Common myeloid progenitor, CD34-positive (primary cell): ENCODE measurements at regions of chr12 and their contacts with region 1.

Region 1: DNA sequence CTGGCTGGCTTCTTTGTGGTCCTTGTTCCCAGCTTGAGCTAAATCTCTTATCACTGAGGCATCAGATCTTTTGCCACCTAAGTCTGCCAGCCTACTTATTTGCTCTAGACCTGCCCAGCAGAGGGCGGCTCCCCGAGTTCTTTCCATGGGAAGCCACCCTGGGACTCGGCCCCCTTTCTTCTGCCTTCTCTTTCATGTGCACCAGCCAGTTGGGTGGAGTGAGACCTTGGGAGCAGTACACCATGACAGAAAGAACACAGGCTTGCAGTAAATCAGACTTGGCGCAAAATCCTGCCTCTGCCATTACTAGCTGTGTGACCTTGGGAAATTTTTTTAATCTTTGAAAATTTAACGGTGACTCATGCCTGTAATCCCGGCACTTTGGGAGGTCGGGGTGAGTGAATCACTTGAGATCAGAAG is 7.4 kb downstream of the SMAGP start:
- DNase-seq: peak; percentile 65 to 76 (median 68)
- H3K4me3 ChIP-seq: no peak overlapping the region
- H3K27ac ChIP-seq: no peak overlapping the region
- H3K4me1 ChIP-seq: peaks cover 0 to 2% (median 0%) of the 10 kb centered on the region in 4 experiments
- H3K27me3 ChIP-seq: no peaks in the 10 kb centered on the region

Region 2: DNA sequence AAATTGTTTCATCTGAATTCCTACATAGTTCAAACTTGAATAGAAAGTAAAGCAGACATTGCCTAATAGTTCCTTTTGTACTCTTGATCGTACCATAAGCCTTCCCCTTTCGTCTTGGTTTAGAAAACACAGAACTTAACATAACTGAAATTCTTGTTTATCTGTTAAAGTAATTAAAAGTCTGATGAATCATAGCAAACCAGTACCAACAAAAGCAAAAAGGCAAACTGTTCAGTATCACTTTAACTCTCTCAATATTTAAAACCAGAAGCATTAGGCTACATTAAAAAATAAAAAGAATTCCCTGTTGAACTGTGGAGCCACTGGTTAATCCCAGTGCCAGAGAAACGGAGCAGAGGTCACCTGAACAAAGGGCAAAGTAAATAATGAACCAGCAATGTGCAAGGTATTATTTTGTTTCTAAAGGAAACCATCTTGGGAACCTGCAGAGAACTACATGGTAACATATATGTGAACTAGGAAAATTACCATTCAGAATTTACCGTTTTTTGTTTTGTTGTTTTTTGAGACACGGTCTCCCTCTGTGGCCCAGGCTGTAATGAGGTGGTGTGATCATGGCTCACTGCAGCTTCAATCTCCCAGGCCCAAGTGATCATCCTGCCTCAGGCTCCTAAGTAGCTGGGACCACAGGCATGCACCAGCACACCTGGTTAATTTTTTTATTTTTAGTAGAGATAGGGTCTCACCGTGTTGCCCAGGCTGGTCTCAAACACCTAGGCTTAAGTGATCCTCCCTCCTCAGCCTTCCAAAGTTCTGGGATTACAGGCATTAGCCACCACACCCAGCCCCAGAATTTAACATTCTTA is 327.6 kb before region 1 on chr12:
- CTCF ChIA-PET with region 1: no interaction called
- POLR2A ChIA-PET with region 1: no interaction called
- DNase-seq: peak in 2 of 3 donors; percentile 44 to 57
- H3K4me3 ChIP-seq: peak overlapping the region in 4 of 7 experiments; percentile 23 to 68 (median 46)
- H3K27ac ChIP-seq: peak overlapping the region; percentile 36 to 73
- H3K4me1 ChIP-seq: peaks cover 8 to 43% (median 32%) of the 10 kb centered on the region in 4 experiments
- H3K27me3 ChIP-seq: no peaks in the 10 kb centered on the region

Region 3: DNA sequence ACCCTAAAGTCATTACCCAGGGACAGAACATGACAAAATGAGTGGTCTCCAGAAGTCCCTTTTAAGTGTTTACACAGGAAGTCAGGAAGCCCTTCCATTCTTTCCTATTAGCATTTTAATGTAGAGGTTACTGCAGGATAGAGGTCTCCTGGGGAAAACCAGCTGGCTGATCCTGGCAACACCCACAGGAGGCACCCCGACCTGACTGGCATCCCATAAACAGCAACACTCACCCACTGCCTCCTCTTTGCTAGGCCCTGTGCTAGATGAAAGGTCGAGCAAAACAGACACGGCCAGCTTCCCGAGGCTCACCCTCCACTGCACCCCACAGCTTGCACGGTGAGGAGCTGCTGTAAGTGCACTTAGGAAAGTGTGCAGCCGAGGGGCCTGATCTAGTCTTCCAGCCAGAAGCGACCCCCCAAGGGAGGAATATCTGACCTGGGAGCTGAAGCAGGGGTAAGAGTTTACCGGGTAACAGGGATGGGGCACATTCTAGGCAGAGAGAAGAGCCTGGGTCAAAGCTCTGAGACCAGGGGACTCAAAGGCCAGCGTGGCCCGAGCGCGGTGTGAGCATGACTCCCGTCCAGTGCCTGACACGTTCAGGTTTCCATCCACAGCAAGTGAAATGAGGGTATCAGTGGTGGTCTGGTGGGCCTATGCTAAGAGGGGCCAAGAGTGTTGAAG is 15.1 kb before region 1 on chr12:
- CTCF ChIA-PET with region 1: interaction called, 22 read pairs
- POLR2A ChIA-PET with region 1: interaction called, 6 read pairs
- DNase-seq: no peak
- H3K4me3 ChIP-seq: no peak overlapping the region
- H3K27ac ChIP-seq: no peak overlapping the region
- H3K4me1 ChIP-seq: peaks cover 15 to 34% (median 26%) of the 10 kb centered on the region in 4 experiments
- H3K27me3 ChIP-seq: no peaks in the 10 kb centered on the region

Region 4: GRCh38 chr12:51351913-51352532 is 89.3 kb after region 1 on chr12:
- CTCF ChIA-PET with region 1: interaction called, 22 read pairs
- POLR2A ChIA-PET with region 1: no interaction called
- DNase-seq: peak; percentile 50 to 74 (median 64)
- H3K4me3 ChIP-seq: no peak overlapping the region
- H3K27ac ChIP-seq: no peak overlapping the region
- H3K4me1 ChIP-seq: no peaks in the 10 kb centered on the region
- H3K27me3 ChIP-seq: no peaks in the 10 kb centered on the region